ENCODE measurements at regions of chr21 and their contacts with region 1.

Region 1: DNA sequence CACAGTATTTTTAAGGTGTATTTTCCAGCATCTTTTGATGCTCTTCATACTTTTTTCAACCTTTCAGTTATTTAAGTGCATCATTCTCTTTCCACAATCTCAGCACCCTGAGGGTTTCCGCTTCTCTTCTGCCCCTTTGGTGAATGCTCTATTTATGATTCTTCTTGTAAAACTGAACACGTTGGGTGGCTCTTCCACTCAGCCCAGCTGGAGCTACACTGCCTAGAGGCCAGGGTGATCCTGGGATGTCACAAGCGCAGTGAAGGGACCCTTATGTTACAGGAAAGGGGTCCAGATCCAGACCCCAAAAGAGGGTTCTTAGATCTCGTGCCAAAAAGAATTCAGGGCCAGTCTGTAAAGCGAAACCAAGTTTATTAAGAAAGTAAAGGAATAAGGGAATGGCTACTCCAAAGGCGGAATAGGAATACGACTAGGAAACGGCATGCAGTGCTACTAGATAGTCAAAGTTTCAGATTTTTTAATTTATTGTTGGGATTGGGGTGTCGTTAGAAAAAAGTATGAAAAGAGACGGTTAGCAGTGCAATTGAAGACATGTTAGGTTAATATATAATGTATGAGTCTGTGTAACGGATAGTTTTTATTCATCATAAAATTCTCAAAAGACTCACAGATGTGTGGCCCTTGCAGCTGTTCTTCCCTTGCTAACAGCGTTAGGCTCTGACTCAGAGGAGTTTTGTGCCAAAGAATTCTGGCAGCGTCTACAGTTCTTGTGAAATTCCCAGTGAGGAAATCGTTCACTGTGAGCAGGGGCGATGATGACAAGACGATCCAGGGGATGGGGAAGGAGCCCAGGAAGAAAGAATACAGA is 14.4 kb upstream of the ERVH48-1 start:
- DNase-seq: peak; percentile 99
- ATAC-seq: peak; percentile 93
- H3K4me3 ChIP-seq: peak overlapping the region; percentile 26; the same call in 1 of the 2 replicates
- H3K27ac ChIP-seq: peak overlapping the region; percentile 92
- H3K4me1 ChIP-seq: no peaks in the 10 kb centered on the region
- H3K27me3 ChIP-seq: no peaks in the 10 kb centered on the region
- CTCF ChIP-seq: no peak
- POLR2A ChIP-seq: no peak
- RAD21 ChIP-seq: 0 out of 2 replicates have a peak, but pooled peaks have one; percentile 19

Region 2: DNA sequence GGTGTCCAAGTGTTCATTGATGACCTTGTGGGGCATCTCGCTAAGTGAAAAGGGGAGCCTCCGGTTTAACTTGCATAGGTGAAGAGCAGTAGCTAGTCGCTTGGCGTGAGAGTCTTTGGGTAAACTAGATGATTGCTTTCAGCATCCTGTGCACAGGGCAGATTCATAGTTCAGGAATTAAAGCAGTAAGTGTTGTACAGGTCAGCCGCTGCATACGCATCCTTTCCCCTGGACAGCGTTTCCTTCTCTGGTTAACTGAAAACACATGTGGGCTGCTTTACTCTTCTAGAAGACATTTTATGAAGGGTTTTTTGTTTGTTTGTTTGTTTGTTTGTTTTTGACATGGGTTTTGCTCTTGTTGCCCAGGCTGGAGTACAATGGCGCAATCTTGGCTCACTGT is 34.6 kb before region 1 on chr21:
- CTCF ChIA-PET with region 1: no interaction called
- POLR2A ChIA-PET with region 1: no interaction called
- dilution Hi-C with region 1: no loop called
- in situ Hi-C with region 1: no loop called
- intact Hi-C with region 1: no loop called
- DNase-seq: peak; percentile 7
- ATAC-seq: no peak
- H3K4me3 ChIP-seq: no peak overlapping the region
- H3K27ac ChIP-seq: no peak overlapping the region
- H3K4me1 ChIP-seq: no peaks in the 10 kb centered on the region
- H3K27me3 ChIP-seq: no peaks in the 10 kb centered on the region
- CTCF ChIP-seq: no peak
- POLR2A ChIP-seq: no peak
- RAD21 ChIP-seq: no peak

Region 3: GRCh38 chr21:42956819-42957632 is 17.2 kb after region 1 on chr21:
- CTCF ChIA-PET with region 1: no interaction called
- POLR2A ChIA-PET with region 1: no interaction called
- dilution Hi-C with region 1: no loop called
- in situ Hi-C with region 1: no loop called
- intact Hi-C with region 1: loop called (anchors 1 kb)
- DNase-seq: no peak
- ATAC-seq: no peak
- H3K4me3 ChIP-seq: no peak overlapping the region
- H3K27ac ChIP-seq: no peak overlapping the region
- H3K4me1 ChIP-seq: 0 out of 2 replicates have a peak, but pooled peaks cover 2% of the 10 kb centered on the region
- H3K27me3 ChIP-seq: no peaks in the 10 kb centered on the region
- CTCF ChIP-seq: no peak
- POLR2A ChIP-seq: no peak
- RAD21 ChIP-seq: no peak

Region 4: GRCh38 chr21:43323244-43324005 is 383.6 kb after region 1 on chr21:
- CTCF ChIA-PET with region 1: no interaction called
- POLR2A ChIA-PET with region 1: no interaction called
- dilution Hi-C with region 1: no loop called
- in situ Hi-C with region 1: no loop called
- intact Hi-C with region 1: no loop called
- DNase-seq: no peak
- ATAC-seq: no peak
- H3K4me3 ChIP-seq: no peak overlapping the region
- H3K27ac ChIP-seq: no peak overlapping the region
- H3K4me1 ChIP-seq: peaks cover 13% of the 10 kb centered on the region
- H3K27me3 ChIP-seq: peaks cover 7% of the 10 kb centered on the region; the same call in 1 of the 2 replicates
- CTCF ChIP-seq: no peak
- POLR2A ChIP-seq: no peak
- RAD21 ChIP-seq: no peak

Region 5: DNA sequence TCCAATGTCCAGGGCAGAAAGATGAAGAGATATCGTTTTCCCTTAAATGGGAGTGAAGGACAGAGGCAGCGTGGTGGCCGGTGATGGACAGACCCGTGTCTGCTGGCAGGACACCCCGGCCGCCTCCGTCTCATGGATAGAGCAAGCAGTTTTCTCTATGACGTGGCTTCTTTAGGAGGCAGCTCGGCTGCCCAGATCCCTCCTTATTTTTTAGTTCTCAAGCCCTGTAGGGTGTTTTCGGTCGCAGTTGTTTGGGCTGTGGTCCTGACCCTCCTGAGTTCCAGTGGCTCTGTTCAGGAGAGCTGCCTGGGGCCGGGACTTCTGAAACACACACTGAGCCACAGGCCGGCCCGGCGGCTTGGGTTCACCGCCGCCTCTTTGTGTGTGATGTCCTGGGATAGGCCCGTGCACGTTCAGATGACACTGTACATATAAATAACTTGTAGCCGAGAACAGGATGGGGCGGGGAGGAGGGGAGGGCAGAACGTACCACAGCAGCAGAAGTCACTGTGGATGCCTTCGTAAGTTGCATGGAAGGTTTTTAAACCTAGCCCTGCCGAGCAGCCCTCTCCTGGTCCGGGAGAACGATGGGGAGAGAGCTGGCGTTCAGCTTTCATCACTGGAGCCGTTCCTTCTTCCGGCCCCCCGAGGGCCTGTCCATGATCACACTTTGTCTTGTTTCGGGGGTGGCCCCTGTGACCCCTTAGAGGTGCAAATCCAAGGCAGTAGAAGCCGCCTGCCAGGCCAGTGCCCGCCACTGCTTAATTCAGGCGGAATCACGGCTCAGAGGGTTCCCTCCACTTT is 421.9 kb after region 1 on chr21:
- CTCF ChIA-PET with region 1: no interaction called
- POLR2A ChIA-PET with region 1: no interaction called
- dilution Hi-C with region 1: no loop called
- in situ Hi-C with region 1: no loop called
- intact Hi-C with region 1: no loop called
- DNase-seq: peak; percentile 79
- ATAC-seq: peak; percentile 88
- H3K4me3 ChIP-seq: no peak overlapping the region
- H3K27ac ChIP-seq: peak overlapping the region; percentile 80
- H3K4me1 ChIP-seq: peaks cover 10% of the 10 kb centered on the region
- H3K27me3 ChIP-seq: no peaks in the 10 kb centered on the region
- CTCF ChIP-seq: no peak
- POLR2A ChIP-seq: peak; percentile 79
- RAD21 ChIP-seq: 0 out of 2 replicates have a peak, but pooled peaks have one; percentile 2

Measured in IMR-90 (cell line).